CD14-positive monocyte (primary cell): ENCODE measurements at regions of chr4 and their contacts with region 1.

Region 1: GRCh38 chr4:168374772-168375523 is 56.4 kb upstream of the DDX60 start:
- DNase-seq: no peak
- H3K4me3 ChIP-seq: no peak overlapping the region
- H3K4me3 Mint-ChIP-seq: no peak overlapping the region
- H3K27ac ChIP-seq: no peak overlapping the region
- H3K27ac Mint-ChIP-seq: no peak overlapping the region
- H3K4me1 ChIP-seq: no peaks in the 10 kb centered on the region
- H3K4me1 Mint-ChIP-seq: no peaks in the 10 kb centered on the region
- H3K27me3 ChIP-seq: no peaks in the 10 kb centered on the region
- H3K27me3 Mint-ChIP-seq: no peaks in the 10 kb centered on the region
- CTCF ChIP-seq: no peak

Region 2: DNA sequence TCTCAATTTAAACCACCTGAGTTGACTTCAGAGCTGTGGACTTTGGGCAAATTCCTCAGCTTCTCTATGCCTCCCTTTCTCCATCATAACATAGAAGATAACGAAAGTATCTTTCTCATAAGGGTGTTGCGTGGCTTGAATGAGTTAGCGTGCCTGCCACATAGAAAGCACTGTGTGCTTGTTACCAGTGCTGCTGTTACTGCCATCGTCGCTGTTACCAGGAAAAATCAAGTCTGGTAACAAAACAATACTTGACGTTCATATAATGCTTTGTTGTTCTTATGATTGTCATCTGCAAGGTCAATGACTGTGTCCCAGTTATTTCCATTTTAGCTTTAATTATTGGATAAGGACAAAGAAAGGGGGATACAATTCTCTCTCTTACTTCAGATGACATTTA is 41.0 kb after region 1 on chr4:
- intact Hi-C with region 1: loop called in 1 of 2 experiments (anchors 5 kb)
- DNase-seq: no peak
- H3K4me3 ChIP-seq: no peak overlapping the region
- H3K4me3 Mint-ChIP-seq: no peak overlapping the region
- H3K27ac ChIP-seq: no peak overlapping the region
- H3K27ac Mint-ChIP-seq: peak overlapping the region in 2 of 7 donors; percentile 33 to 69
- H3K4me1 ChIP-seq: no peaks in the 10 kb centered on the region
- H3K4me1 Mint-ChIP-seq: no peaks in the 10 kb centered on the region
- H3K27me3 ChIP-seq: no peaks in the 10 kb centered on the region
- H3K27me3 Mint-ChIP-seq: no peaks in the 10 kb centered on the region
- CTCF ChIP-seq: no peak

Region 3: GRCh38 chr4:168440442-168441264 is 65.7 kb after region 1 on chr4:
- intact Hi-C with region 1: no loop called
- DNase-seq: peak; percentile 8 to 80 (median 71)
- H3K4me3 ChIP-seq: no peak overlapping the region
- H3K4me3 Mint-ChIP-seq: no peak overlapping the region
- H3K27ac ChIP-seq: peak overlapping the region in 1 of 2 donors; percentile 54
- H3K27ac Mint-ChIP-seq: peak overlapping the region in 5 of 7 donors; percentile 10 to 89 (median 78)
- H3K4me1 ChIP-seq: peaks cover 0 to 3% of the 10 kb centered on the region in 2 donors
- H3K4me1 Mint-ChIP-seq: peaks cover 15% of the 10 kb centered on the region
- H3K27me3 ChIP-seq: no peaks in the 10 kb centered on the region
- H3K27me3 Mint-ChIP-seq: peaks cover 0 to 2% (median 0%) of the 10 kb centered on the region in 3 donors
- CTCF ChIP-seq: no peak

Region 4: GRCh38 chr4:168585168-168586091 is 210.5 kb after region 1 on chr4:
- intact Hi-C with region 1: no loop called
- DNase-seq: peak in 2 of 3 donors; percentile 10 to 15
- H3K4me3 ChIP-seq: no peak overlapping the region
- H3K4me3 Mint-ChIP-seq: no peak overlapping the region
- H3K27ac ChIP-seq: no peak overlapping the region
- H3K27ac Mint-ChIP-seq: peak overlapping the region in 1 of 7 donors; percentile 2
- H3K4me1 ChIP-seq: no peaks in the 10 kb centered on the region
- H3K4me1 Mint-ChIP-seq: no peaks in the 10 kb centered on the region
- H3K27me3 ChIP-seq: no peaks in the 10 kb centered on the region
- H3K27me3 Mint-ChIP-seq: peaks cover 0 to 2% (median 0%) of the 10 kb centered on the region in 3 donors
- CTCF ChIP-seq: peak; percentile 62